ENCODE measurements at regions of chr5 and their contacts with region 1.

Region 1: DNA sequence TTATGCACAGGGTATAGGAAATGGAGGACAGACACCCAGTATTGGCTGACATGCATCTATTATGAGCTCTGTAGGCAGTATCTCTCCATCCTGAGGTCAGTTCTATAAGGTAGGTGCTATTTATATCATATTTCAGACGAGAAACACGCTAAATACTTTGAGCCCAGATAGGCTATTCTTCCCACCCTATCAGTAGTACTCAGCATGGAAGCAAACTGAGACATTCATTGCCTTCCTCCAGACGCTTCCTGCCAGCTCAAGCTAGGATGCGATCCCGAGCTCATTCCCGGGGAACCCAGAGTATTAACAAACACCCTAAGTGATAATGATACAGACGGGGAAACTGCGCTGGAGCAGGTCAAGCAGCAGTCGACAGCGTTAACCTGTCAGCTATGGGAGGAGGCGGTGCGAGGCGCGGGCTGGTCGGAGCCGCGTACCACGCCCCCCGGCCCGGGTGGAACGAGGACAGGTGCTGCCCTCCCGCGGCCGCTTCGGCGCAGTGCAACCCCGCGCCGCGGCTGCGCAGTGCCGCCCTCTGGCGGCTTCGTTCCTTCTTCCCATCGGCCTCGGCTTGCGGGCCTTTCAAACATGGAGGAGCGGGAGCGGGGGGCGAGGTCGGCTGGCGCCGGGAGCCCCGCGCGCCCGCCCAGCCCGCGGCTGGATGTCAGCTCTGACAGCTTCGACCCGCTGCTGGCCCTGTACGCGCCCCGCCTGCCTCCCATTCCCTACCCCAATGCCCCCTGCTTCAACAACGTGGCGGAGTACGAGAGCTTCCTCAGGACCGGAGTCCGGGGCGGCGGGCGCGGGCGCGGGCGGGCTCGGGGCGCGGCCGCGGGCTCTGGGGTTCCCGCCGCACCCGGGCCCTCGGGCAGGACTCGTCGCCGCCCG is at the start of gene LSM11:
- DNase-seq: peak; percentile 56
- ATAC-seq: peak; percentile 93
- H3K4me3 ChIP-seq: peak within 1 kb of the TSS; percentile 85
- H3K27ac ChIP-seq: peak within 1 kb of the TSS; percentile 45; the same call in 1 of the 2 replicates
- H3K4me1 ChIP-seq: peaks cover 12% of the 10 kb centered on the region; the same call in 1 of the 2 replicates
- H3K27me3 ChIP-seq: no peaks in the 10 kb centered on the region
- CTCF ChIP-seq: peak; percentile 97 to 100 (median 99); a peak in 5 of 6 replicates
- EP300 ChIP-seq: no peak
- POLR2A ChIP-seq: peak; percentile 64
- RAD21 ChIP-seq: peak; percentile 87
- polyA plus RNA-seq, gene LSM11: 1.5 to 2.1 TPM

Region 2: GRCh38 chr5:157328277-157328912 is 415.0 kb before region 1 on chr5:
- CTCF ChIA-PET with region 1: interaction called, 39 read pairs
- POLR2A ChIA-PET with region 1: interaction called, 3 read pairs
- RAD21 ChIA-PET with region 1: interaction called, 18 read pairs
- SMC1A ChIA-PET with region 1: interaction called, 6 read pairs
- in situ Hi-C with region 1: no loop called
- intact Hi-C with region 1: loop called (anchors 5 kb)
- DNase-seq: no peak
- ATAC-seq: peak; percentile 100
- H3K4me3 ChIP-seq: no peak overlapping the region
- H3K27ac ChIP-seq: no peak overlapping the region
- H3K4me1 ChIP-seq: no peaks in the 10 kb centered on the region
- H3K27me3 ChIP-seq: no peaks in the 10 kb centered on the region
- CTCF ChIP-seq: peak; percentile 85 to 94 (median 91)
- EP300 ChIP-seq: no peak
- POLR2A ChIP-seq: no peak
- RAD21 ChIP-seq: peak; percentile 85

Region 3: DNA sequence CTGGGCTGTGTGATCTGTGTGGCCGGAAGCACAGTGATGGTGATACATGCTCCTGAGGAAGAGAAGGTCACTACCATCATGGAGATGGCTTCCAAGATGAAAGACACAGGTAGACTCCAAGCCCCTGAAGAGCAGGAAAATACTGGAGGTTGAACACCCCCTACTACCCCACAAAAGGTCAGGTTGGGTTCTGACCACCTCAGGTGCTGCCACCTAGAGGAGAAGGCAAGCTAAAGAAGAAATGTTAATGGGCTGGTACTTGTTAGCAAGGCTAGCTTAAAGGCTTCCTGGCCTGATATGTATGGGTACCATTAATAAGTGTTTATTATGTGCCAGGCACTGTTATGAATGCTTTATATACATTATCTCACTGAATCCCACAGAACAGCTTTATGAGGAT is 271.7 kb before region 1 on chr5:
- CTCF ChIA-PET with region 1: interaction called, 13 read pairs
- POLR2A ChIA-PET with region 1: no interaction called
- RAD21 ChIA-PET with region 1: interaction called, 6 read pairs
- SMC1A ChIA-PET with region 1: interaction called, 5 read pairs
- in situ Hi-C with region 1: no loop called
- intact Hi-C with region 1: no loop called
- DNase-seq: no peak
- ATAC-seq: peak; percentile 81
- H3K4me3 ChIP-seq: no peak overlapping the region
- H3K27ac ChIP-seq: no peak overlapping the region
- H3K4me1 ChIP-seq: no peaks in the 10 kb centered on the region
- H3K27me3 ChIP-seq: no peaks in the 10 kb centered on the region
- CTCF ChIP-seq: peak; percentile 48 to 66 (median 62); a peak in 5 of 6 replicates
- EP300 ChIP-seq: no peak
- POLR2A ChIP-seq: no peak
- RAD21 ChIP-seq: peak; percentile 68

Region 4: DNA sequence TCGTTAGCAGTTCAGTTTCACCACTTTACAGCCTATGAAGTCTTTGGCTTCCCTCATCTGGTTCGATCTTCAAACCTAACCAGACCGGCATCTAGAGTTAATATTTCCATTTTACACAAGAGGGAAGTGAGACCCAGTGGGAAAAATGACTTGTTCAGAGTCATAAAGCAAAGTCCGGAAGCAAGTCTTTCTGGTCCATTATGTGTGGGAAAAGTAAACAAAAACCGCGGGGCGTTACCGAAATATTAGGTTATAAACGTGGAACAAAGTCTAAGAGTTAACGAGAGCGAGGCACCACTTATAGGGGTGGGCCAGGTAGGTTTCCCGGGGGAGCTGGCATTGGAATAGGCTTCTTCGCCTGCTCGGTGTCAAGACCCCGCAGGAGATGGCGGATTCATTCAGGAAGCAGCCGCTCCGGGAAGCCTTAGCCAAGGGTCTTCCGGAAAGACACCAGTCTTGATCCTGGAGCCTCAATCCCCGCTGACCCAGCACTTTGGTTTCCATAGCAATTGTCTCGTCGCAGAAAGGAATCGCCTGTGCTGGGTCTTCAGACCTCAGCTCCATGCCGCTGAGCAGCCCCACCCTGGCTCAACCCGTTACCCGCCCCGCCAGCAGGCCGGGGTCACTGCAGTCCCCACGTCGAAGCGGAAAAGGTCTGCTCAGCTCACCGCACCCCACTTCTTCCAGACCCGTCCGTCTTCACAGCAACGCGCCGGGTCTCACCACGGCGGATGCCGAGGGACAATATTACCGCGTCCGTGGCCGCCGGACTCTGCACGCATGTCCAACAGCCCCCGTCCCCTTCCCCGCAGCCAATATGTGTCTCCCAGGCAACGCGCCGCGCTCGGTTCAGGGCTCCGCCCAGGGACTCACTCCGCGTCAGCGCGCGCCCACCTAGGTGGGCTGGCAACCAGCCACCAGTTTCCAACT is 72.5 kb before region 1 on chr5 and contains the start of gene C5orf52:
- CTCF ChIA-PET with region 1: interaction called, 95 read pairs
- POLR2A ChIA-PET with region 1: interaction called, 4 read pairs
- RAD21 ChIA-PET with region 1: interaction called, 14 read pairs
- SMC1A ChIA-PET with region 1: interaction called, 40 read pairs
- in situ Hi-C with region 1: loop called (anchors 5 kb)
- intact Hi-C with region 1: loop called (anchors 1 kb)
- DNase-seq: peak; percentile 23
- ATAC-seq: peak; percentile 72
- H3K4me3 ChIP-seq: peak within 1 kb of the TSS; percentile 68
- H3K27ac ChIP-seq: no peak within 1 kb of the TSS
- H3K4me1 ChIP-seq: peaks cover 5% of the 10 kb centered on the region
- H3K27me3 ChIP-seq: no peaks in the 10 kb centered on the region; a peak in 3 of 4 replicates
- CTCF ChIP-seq: no peak
- EP300 ChIP-seq: no peak
- POLR2A ChIP-seq: no peak
- RAD21 ChIP-seq: 0 out of 2 replicates have a peak, but pooled peaks have one; percentile 3
- polyA plus RNA-seq, gene C5orf52: not detected

Region 5: GRCh38 chr5:157731272-157732129 is 11.9 kb before region 1 on chr5 and contains the start of gene THG1L:
- CTCF ChIA-PET with region 1: interaction called, 66 read pairs
- POLR2A ChIA-PET with region 1: interaction called, 17 read pairs
- RAD21 ChIA-PET with region 1: interaction called, 11 read pairs
- SMC1A ChIA-PET with region 1: interaction called, 11 read pairs
- in situ Hi-C with region 1: no loop called
- intact Hi-C with region 1: no loop called
- DNase-seq: peak; percentile 94
- ATAC-seq: peak; percentile 92
- H3K4me3 ChIP-seq: peak within 1 kb of the TSS; percentile 85
- H3K27ac ChIP-seq: peak within 1 kb of the TSS; percentile 92
- H3K4me1 ChIP-seq: peaks cover 21% of the 10 kb centered on the region
- H3K27me3 ChIP-seq: no peaks in the 10 kb centered on the region
- CTCF ChIP-seq: no peak
- EP300 ChIP-seq: no peak
- POLR2A ChIP-seq: peak; percentile 97
- RAD21 ChIP-seq: no peak
- polyA plus RNA-seq, gene THG1L: 37.2 to 58.0 TPM

Region 6: GRCh38 chr5:158013939-158014338 is 270.5 kb after region 1 on chr5:
- CTCF ChIA-PET with region 1: no interaction called
- POLR2A ChIA-PET with region 1: interaction called, 10 read pairs
- RAD21 ChIA-PET with region 1: no interaction called
- SMC1A ChIA-PET with region 1: no interaction called
- in situ Hi-C with region 1: no loop called
- intact Hi-C with region 1: no loop called
- DNase-seq: no peak
- ATAC-seq: peak; percentile 56
- H3K4me3 ChIP-seq: no peak overlapping the region
- H3K27ac ChIP-seq: no peak overlapping the region
- H3K4me1 ChIP-seq: no peaks in the 10 kb centered on the region
- H3K27me3 ChIP-seq: peaks cover 0 to 2% of the 10 kb centered on the region in 2 experiments; a peak in 2 of 4 replicates
- CTCF ChIP-seq: peak; percentile 29 to 41 (median 35); a peak in 3 of 6 replicates
- EP300 ChIP-seq: no peak
- POLR2A ChIP-seq: no peak
- RAD21 ChIP-seq: no peak

Region 7: GRCh38 chr5:158096835-158097234 is 353.4 kb after region 1 on chr5:
- CTCF ChIA-PET with region 1: no interaction called
- POLR2A ChIA-PET with region 1: no interaction called
- RAD21 ChIA-PET with region 1: no interaction called
- SMC1A ChIA-PET with region 1: no interaction called
- in situ Hi-C with region 1: no loop called
- intact Hi-C with region 1: no loop called
- DNase-seq: no peak
- ATAC-seq: no peak
- H3K4me3 ChIP-seq: no peak overlapping the region
- H3K27ac ChIP-seq: no peak overlapping the region
- H3K4me1 ChIP-seq: no peaks in the 10 kb centered on the region
- H3K27me3 ChIP-seq: peaks cover 0 to 3% of the 10 kb centered on the region in 2 experiments; a peak in 2 of 4 replicates
- CTCF ChIP-seq: no peak
- EP300 ChIP-seq: no peak
- POLR2A ChIP-seq: no peak
- RAD21 ChIP-seq: no peak

Measured in GM12878 (cell line).